ENCODE measurements at regions of chr9 and their contacts with region 1.

Region 1: DNA sequence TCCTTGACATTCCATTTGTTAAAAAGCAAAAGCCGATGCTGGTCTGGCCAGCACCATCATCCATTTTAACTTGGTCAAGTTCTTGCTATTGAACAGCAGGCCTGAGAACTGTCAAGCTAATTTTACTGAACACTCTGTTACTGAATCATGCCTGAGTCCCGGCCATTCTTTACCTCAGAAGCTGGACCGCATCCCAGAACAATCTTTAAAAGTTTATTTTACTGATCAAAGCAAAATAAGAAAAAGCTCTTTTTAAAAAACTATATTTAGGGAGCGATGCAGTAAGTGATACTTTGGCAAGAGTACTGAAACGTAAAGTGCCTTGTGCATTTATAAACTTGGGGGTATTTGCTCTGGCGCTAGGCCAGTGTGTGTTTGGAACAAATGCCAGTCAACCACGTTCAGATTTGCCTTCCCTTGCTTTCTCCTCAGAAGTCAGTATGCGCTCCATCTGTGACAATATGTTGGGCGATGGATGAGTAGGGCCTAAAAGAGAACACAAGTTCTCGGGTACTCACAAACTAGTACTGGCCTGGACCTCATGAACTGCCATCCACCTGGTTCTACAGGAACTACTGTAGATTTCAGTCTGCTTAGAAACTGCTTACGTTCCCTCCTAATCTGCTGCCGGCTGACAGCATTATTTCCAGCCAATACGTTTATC is 161.9 kb downstream of the MAPKAP1 start:
- DNase-seq: no peak
- ATAC-seq: peak; percentile 43

Region 2: GRCh38 chr9:125486576-125486975 is 58.5 kb before region 1 on chr9:
- intact Hi-C with region 1: loop called (anchors 2 kb)
- DNase-seq: no peak
- ATAC-seq: peak; percentile 91

Region 3: GRCh38 chr9:125631391-125632085 is 86.4 kb after region 1 on chr9:
- intact Hi-C with region 1: no loop called
- DNase-seq: no peak
- ATAC-seq: peak; percentile 65

Measured in Right ventricle myocardium inferior (tissue), 1 donor.